ENCODE measurements at regions of chr9 and their contacts with region 1.

Region 1: GRCh38 chr9:136644598-136645351 is 17.9 kb upstream of the EGFL7 start:
- DNase-seq: peak; percentile 81 to 92
- ATAC-seq: peak; percentile 43 to 74 (median 57)
- H3K4me3 ChIP-seq: peak overlapping the region in 9 of 10 donors; percentile 36 to 66 (median 54)
- H3K27ac ChIP-seq: peak overlapping the region; percentile 90 to 97 (median 95)
- H3K4me1 ChIP-seq: peaks cover 16 to 96% (median 66%) of the 10 kb centered on the region in 9 donors
- H3K27me3 ChIP-seq: peaks cover 0 to 43% (median 0%) of the 10 kb centered on the region in 7 donors
- CTCF ChIP-seq: peak; percentile 83 to 93 (median 89)

Region 2: DNA sequence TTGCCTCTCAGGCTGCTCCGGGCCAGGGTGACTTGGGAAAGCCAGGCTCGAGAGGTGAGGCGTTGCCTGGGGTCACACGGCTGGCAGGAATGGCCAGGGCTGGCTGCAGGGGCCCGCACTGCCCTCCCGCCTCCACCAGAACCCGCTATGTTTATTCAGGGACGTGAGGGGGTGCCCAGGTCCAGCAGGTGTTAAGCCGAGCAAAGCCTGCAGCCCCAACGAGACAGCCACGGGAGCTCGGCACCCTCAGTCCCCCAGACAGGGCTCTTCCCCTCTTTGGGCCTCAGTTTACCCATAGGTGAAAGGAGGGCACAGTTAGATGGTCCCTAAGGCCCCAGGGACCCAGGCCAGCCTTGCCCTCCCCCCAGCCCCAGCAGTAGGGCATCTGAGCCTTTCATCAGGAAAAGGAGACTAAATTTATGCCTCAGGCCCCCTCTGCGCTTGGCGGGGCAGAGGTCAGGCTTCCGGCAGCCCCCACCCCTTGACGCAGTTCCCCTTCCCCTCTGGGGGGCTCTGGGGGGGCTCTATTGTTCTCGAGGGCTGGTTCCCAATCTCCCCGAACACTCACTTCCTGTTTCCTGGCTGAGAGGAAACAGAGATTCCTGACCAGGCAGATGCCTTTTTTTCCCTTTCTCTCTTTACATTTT is 10.9 kb after region 1 on chr9:
- intact Hi-C with region 1: loop called in 1 of 10 experiments (anchors 1 kb)
- DNase-seq: peak; percentile 73 to 92
- ATAC-seq: peak; percentile 56 to 86 (median 81)
- H3K4me3 ChIP-seq: peak overlapping the region in 6 of 10 donors; percentile 74 to 83 (median 76)
- H3K27ac ChIP-seq: peak overlapping the region; percentile 92 to 99 (median 96)
- H3K4me1 ChIP-seq: peaks cover 0 to 63% (median 30%) of the 10 kb centered on the region in 9 donors
- H3K27me3 ChIP-seq: peaks cover 0 to 72% (median 0%) of the 10 kb centered on the region in 7 donors
- CTCF ChIP-seq: no peak

Region 3: GRCh38 chr9:136662656-136663581 is 18.1 kb after region 1 on chr9 and contains the start of gene EGFL7:
- intact Hi-C with region 1: loop called in 5 of 10 experiments (anchors 1 to 2 kb)
- DNase-seq: peak; percentile 79 to 91
- ATAC-seq: peak; percentile 43 to 77 (median 70)
- H3K4me3 ChIP-seq: peak within 1 kb of the TSS; percentile 57 to 83 (median 76)
- H3K27ac ChIP-seq: peak within 1 kb of the TSS; percentile 92 to 99 (median 96)
- H3K4me1 ChIP-seq: peaks cover 0 to 35% (median 13%) of the 10 kb centered on the region in 9 donors
- H3K27me3 ChIP-seq: peaks cover 0 to 94% (median 0%) of the 10 kb centered on the region in 7 donors
- CTCF ChIP-seq: no peak
- total RNA-seq, gene EGFL7: 68.6 to 115 (median 99.6) TPM

Region 4: GRCh38 chr9:136694236-136694942 is 49.6 kb after region 1 on chr9:
- intact Hi-C with region 1: loop called in 3 of 10 experiments (anchors 5 to 10 kb)
- DNase-seq: peak; percentile 70 to 79
- ATAC-seq: peak; percentile 29 to 64 (median 50)
- H3K4me3 ChIP-seq: no peak overlapping the region
- H3K27ac ChIP-seq: no peak overlapping the region
- H3K4me1 ChIP-seq: peaks cover 10 to 62% (median 40%) of the 10 kb centered on the region in 9 donors
- H3K27me3 ChIP-seq: peaks cover 0 to 1% (median 0%) of the 10 kb centered on the region in 7 donors
- CTCF ChIP-seq: peak; percentile 50 to 84 (median 77)